Mammary epithelial cell (primary cell): ENCODE measurements at regions of chrX and their contacts with region 1.

Region 1: DNA sequence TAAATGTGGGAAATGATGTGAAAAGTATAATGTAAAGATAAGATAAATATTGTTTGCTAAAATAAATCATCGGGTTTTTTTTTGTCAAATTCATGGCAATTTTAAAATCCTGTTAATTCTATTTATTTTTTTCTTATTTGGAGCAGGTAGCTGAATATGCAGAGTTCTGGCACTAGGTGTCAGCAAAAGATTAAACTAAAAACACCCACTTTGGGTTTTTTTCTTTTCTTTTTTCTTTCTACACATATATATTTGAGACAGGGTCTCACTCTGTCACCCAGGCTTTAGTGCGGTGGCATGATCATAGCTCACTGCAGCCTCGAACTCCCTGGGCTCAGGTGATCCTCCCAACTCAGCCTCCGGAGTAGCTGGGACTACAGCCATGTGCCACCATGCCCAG is 6.9 kb upstream of the RAP2C start:
- DNase-seq: no peak
- H3K4me3 ChIP-seq: no peak overlapping the region
- H3K27ac ChIP-seq: no peak overlapping the region
- H3K4me1 ChIP-seq: no peaks in the 10 kb centered on the region
- H3K27me3 ChIP-seq: no peaks in the 10 kb centered on the region
- CTCF ChIP-seq: peak; percentile 25 to 48

Region 2: GRCh38 chrX:131830400-131831184 is 395.6 kb before region 1 on chrX:
- CTCF ChIA-PET with region 1: no interaction called
- dilution Hi-C with region 1: no loop called
- in situ Hi-C with region 1: loop called in 1 of 2 experiments (anchors 25 kb)
- intact Hi-C with region 1: no loop called
- DNase-seq: peak; percentile 40
- H3K4me3 ChIP-seq: no peak overlapping the region
- H3K27ac ChIP-seq: no peak overlapping the region
- H3K4me1 ChIP-seq: no peaks in the 10 kb centered on the region
- H3K27me3 ChIP-seq: no peaks in the 10 kb centered on the region
- CTCF ChIP-seq: peak in 1 of 2 donors; percentile 30

Region 3: GRCh38 chrX:132270699-132271098 is 44.5 kb after region 1 on chrX:
- CTCF ChIA-PET with region 1: no interaction called
- dilution Hi-C with region 1: no loop called
- in situ Hi-C with region 1: no loop called
- intact Hi-C with region 1: loop called (anchors 2 kb)
- DNase-seq: peak; percentile 85
- H3K4me3 ChIP-seq: no peak overlapping the region
- H3K27ac ChIP-seq: no peak overlapping the region
- H3K4me1 ChIP-seq: peaks cover 3% of the 10 kb centered on the region
- H3K27me3 ChIP-seq: no peaks in the 10 kb centered on the region
- CTCF ChIP-seq: no peak

Region 4: GRCh38 chrX:132292793-132293192 is 66.6 kb after region 1 on chrX:
- CTCF ChIA-PET with region 1: no interaction called
- dilution Hi-C with region 1: no loop called
- in situ Hi-C with region 1: no loop called
- intact Hi-C with region 1: loop called (anchors 5 kb)
- DNase-seq: peak; percentile 49
- H3K4me3 ChIP-seq: no peak overlapping the region
- H3K27ac ChIP-seq: no peak overlapping the region
- H3K4me1 ChIP-seq: no peaks in the 10 kb centered on the region
- H3K27me3 ChIP-seq: no peaks in the 10 kb centered on the region
- CTCF ChIP-seq: peak; percentile 52 to 75

Region 5: DNA sequence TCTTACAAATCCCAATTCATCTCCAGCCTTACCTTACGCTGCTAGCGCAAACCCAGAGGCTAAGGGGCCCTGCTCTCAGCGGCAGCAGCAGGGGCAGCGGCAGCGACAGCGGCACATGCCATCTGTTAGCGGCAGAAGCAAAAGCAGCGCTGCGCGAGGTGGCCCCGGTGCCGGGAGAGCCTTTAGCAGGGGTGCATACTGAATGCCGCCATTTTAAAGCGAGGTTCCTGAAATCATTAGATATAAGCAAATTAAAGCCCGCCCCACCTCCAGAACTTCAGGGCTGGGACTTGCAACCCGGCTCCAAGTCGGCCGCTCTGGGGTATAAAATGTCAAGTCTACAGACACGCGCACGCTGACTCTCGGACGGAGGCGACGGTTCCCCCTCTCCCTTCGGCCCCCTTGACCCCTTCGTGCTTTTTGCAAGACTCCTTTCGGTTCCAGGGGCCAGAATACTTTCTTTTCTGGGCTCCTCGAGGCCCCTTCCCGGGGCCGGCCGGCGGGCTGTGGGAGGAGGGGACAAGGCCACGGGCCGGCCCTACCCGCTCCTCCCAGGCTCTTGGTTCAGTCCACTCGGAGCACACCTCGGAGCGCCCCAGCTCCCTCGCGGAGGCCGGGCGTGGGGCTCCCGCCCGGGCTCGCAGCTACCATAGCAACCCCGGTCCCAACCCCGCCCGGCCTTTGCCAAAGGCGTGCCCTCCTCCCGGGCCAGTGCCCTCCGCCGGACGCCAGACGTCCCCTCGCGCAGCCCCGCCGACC is 262.8 kb after region 1 on chrX and contains the start of gene MBNL3:
- CTCF ChIA-PET with region 1: no interaction called
- dilution Hi-C with region 1: no loop called
- in situ Hi-C with region 1: no loop called
- intact Hi-C with region 1: loop called (anchors 1 kb)
- DNase-seq: peak; percentile 66
- H3K4me3 ChIP-seq: peak within 1 kb of the TSS; percentile 61 to 72 (median 67)
- H3K27ac ChIP-seq: peak within 1 kb of the TSS; percentile 75
- H3K4me1 ChIP-seq: peaks cover 10% of the 10 kb centered on the region
- H3K27me3 ChIP-seq: no peaks in the 10 kb centered on the region
- CTCF ChIP-seq: no peak
- total RNA-seq, gene MBNL3: 5.7 to 12.9 TPM

Region 6: DNA sequence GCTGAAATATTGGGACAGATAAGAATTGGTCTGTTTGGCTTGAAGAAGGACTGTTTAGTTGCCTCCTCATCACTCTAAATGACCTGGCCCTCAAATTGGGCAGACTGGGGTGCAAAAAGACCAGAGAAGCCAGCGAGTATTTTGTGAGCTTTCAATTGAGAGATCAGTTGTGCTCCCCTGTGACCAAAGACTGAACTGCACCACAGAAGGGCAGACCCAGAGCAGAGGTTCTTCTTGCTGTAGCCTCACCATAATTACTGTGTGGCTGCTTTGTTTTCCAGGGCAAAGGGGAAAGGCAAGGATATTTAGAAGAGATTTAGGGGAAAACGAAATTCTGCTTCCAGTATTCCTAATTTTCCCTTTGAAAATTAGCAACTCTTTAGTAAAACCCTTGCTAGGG is 366.7 kb after region 1 on chrX:
- CTCF ChIA-PET with region 1: no interaction called
- dilution Hi-C with region 1: no loop called
- in situ Hi-C with region 1: no loop called
- intact Hi-C with region 1: loop called (anchors 2 kb)
- DNase-seq: no peak
- H3K4me3 ChIP-seq: no peak overlapping the region
- H3K27ac ChIP-seq: no peak overlapping the region
- H3K4me1 ChIP-seq: no peaks in the 10 kb centered on the region
- H3K27me3 ChIP-seq: no peaks in the 10 kb centered on the region
- CTCF ChIP-seq: peak; percentile 7 to 58